HCT116 (cell line): ENCODE measurements at regions of chr2 and their contacts with region 1.

Region 1: GRCh38 chr2:213007290-213007838 is 144.0 kb downstream of the IKZF2 start:
- DNase-seq: no peak
- ATAC-seq: no peak
- H3K4me3 ChIP-seq: no peak overlapping the region
- H3K27ac ChIP-seq: no peak overlapping the region
- H3K4me1 ChIP-seq: no peaks in the 10 kb centered on the region
- H3K27me3 ChIP-seq: no peaks in the 10 kb centered on the region
- CTCF ChIP-seq: no peak
- POLR2A ChIP-seq: no peak
- RAD21 ChIP-seq: no peak

Region 2: DNA sequence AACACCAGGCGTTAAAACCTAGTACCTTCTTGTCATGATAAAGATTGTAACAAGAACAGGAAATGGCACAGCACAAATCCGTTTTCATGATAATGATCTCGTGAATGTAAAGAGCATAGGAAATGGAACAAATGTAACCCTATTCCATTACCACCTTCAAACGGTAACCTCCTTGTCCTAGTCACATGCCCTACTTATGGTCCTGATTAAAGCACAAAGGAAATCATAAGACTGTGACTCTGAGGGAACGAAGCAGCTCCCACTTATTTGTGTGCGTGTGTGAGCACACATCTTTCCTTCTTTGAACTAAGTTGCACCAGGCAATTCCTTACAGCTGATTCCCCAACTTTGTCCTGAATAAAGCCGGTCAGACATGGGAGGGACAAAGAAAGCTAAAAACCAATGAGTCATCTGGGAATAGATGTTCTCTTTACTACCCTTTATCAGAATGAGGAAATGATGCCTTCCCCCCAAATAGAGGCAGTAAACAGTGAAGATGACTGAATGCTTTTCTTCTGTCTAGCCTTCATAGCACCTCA is 48.5 kb before region 1 on chr2:
- CTCF ChIA-PET with region 1: no interaction called
- POLR2A ChIA-PET with region 1: no interaction called
- RAD21 ChIA-PET with region 1: no interaction called
- intact Hi-C with region 1: no loop called
- DNase-seq: no peak
- ATAC-seq: no peak
- H3K4me3 ChIP-seq: no peak overlapping the region
- H3K27ac ChIP-seq: no peak overlapping the region
- H3K4me1 ChIP-seq: no peaks in the 10 kb centered on the region; a peak in 1 of 4 replicates
- H3K27me3 ChIP-seq: no peaks in the 10 kb centered on the region
- CTCF ChIP-seq: no peak
- POLR2A ChIP-seq: no peak
- RAD21 ChIP-seq: no peak

Region 3: DNA sequence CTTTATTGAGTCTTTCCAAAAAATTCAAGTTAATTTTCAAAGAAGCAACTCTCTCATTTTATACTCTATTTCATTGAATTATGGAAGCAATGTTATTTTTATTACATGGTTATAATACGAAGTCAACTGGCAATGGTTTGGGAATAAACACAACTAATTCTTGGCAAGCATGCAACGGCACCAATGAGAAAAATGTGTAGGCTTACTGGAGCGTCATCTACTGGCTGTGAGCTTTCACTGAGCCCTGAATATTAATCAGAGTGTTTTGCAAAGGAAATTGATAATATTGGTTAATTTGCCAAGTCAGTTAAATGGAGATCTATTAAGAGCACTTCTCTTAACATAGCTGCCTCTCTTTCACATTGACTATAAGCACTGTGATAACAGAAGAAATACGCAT is 19.9 kb before region 1 on chr2:
- CTCF ChIA-PET with region 1: no interaction called
- POLR2A ChIA-PET with region 1: no interaction called
- RAD21 ChIA-PET with region 1: no interaction called
- intact Hi-C with region 1: loop called (anchors 2 kb)
- DNase-seq: no peak
- ATAC-seq: no peak
- H3K4me3 ChIP-seq: no peak overlapping the region
- H3K27ac ChIP-seq: no peak overlapping the region
- H3K4me1 ChIP-seq: no peaks in the 10 kb centered on the region
- H3K27me3 ChIP-seq: no peaks in the 10 kb centered on the region
- CTCF ChIP-seq: no peak
- POLR2A ChIP-seq: no peak
- RAD21 ChIP-seq: no peak